PC-9 (cell line): ENCODE measurements at regions of chr11 and their contacts with region 1.

Region 1: DNA sequence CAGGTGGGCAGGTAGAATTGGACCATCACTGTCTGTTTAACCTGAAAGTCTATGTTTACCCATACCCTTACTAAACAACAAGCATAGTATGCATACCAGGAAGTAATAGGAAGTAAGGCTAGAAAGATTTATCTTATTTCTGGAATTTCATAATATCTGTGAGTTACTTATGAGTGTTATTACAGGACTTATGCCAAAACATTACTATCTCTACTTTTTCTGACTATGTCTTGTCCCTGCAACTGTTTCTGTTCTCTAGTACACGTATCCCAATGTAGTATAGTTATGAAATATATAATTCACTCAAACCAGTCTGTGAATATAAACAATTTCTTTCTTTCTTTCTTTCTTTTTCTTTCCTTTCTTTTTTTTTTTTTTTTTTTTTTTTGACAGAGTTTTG is 1400.9 kb upstream of the TENM4 start:
- DNase-seq: no peak
- H3K4me3 ChIP-seq: no peak overlapping the region
- H3K27ac ChIP-seq: no peak overlapping the region
- H3K4me1 ChIP-seq: no peaks in the 10 kb centered on the region
- H3K27me3 ChIP-seq: no peaks in the 10 kb centered on the region
- CTCF ChIP-seq: no peak

Region 2: DNA sequence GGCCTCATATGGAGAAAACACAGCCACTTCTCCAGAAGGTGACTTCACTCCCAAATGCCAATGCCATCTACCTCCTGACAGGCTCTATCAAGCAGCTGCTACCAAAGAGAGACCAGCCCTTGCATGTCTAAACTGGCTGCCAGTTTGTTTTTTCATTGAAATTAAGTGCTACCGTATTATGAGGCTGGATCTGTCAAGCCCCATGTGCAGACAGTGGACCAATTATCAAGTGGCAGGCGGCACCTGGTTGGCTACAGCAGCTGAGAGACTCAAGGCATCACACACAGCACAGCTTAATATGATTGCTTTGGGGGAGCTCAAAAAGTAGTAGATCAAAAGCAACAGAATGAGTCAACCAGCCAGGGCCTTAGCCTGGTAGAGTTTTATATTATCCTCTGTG is 107.9 kb before region 1 on chr11:
- CTCF ChIA-PET with region 1: no interaction called
- POLR2A ChIA-PET with region 1: interaction called, 16 read pairs
- intact Hi-C with region 1: no loop called
- DNase-seq: no peak
- H3K4me3 ChIP-seq: no peak overlapping the region
- H3K27ac ChIP-seq: no peak overlapping the region
- H3K4me1 ChIP-seq: no peaks in the 10 kb centered on the region
- H3K27me3 ChIP-seq: no peaks in the 10 kb centered on the region
- CTCF ChIP-seq: no peak

Region 3: DNA sequence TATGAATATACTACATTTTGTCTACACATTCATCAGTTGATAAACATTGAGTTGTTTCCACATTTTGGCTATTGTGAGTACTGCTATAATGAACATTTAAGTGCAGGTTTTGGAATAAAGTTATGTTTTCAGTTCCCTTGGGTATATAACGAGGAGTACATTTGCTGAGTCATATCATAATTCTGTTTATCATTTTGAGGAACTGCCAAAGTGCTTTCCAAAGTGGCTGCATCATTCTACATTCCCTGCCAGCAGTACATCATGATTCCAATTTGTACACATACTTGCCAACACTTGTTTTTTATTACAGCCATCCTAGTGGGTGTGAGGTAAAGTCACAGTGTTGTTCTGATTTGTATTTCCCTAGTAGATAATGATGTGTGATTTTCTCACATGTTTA is 57.7 kb after region 1 on chr11:
- CTCF ChIA-PET with region 1: no interaction called
- POLR2A ChIA-PET with region 1: no interaction called
- intact Hi-C with region 1: no loop called
- DNase-seq: no peak
- H3K4me3 ChIP-seq: no peak overlapping the region
- H3K27ac ChIP-seq: no peak overlapping the region
- H3K4me1 ChIP-seq: no peaks in the 10 kb centered on the region
- H3K27me3 ChIP-seq: no peaks in the 10 kb centered on the region
- CTCF ChIP-seq: no peak

Region 4: DNA sequence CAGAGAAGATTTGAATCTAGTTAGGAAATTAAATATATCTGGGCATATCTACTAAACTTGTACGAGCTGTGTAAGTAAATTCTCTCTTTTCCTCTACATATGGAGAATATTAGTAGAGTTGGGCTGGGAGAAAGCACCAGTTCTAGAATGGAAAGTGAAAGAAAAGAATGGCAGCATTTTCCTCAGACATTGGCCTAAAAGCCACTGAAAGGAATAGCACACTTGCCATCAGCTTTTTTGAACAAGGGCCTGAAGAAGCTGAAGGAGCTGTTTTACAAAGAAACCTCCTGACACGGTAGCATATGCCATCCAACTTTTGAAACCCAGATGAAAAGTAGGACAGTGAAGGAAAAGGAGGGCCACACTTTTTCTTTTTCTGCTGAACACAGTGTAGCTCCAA is 162.9 kb after region 1 on chr11:
- CTCF ChIA-PET with region 1: no interaction called
- POLR2A ChIA-PET with region 1: no interaction called
- intact Hi-C with region 1: no loop called
- DNase-seq: no peak
- H3K4me3 ChIP-seq: no peak overlapping the region
- H3K27ac ChIP-seq: no peak overlapping the region
- H3K4me1 ChIP-seq: no peaks in the 10 kb centered on the region
- H3K27me3 ChIP-seq: no peaks in the 10 kb centered on the region
- CTCF ChIP-seq: no peak